B cell (primary cell): ENCODE measurements at regions of chr17 and their contacts with region 1.

Region 1: GRCh38 chr17:50345432-50346312 is at the start of gene XYLT2:
- DNase-seq: peak; percentile 95
- ATAC-seq: peak; percentile 95
- H3K4me3 ChIP-seq: peak within 1 kb of the TSS; percentile 9 to 80 (median 75)
- H3K4me3 Mint-ChIP-seq: peak within 1 kb of the TSS; percentile 92
- H3K27ac ChIP-seq: peak within 1 kb of the TSS; percentile 18 to 54
- H3K27ac Mint-ChIP-seq: peak within 1 kb of the TSS; percentile 91
- H3K4me1 ChIP-seq: peaks cover 10 to 21% of the 10 kb centered on the region in 2 donors
- H3K4me1 Mint-ChIP-seq: peaks cover 32% of the 10 kb centered on the region
- H3K27me3 ChIP-seq: no peaks in the 10 kb centered on the region
- H3K27me3 Mint-ChIP-seq: peaks cover 4% of the 10 kb centered on the region
- CTCF ChIP-seq: no peak
- total RNA-seq, gene XYLT2: 29.9 and 30.3 TPM in 2 replicates

Region 2: DNA sequence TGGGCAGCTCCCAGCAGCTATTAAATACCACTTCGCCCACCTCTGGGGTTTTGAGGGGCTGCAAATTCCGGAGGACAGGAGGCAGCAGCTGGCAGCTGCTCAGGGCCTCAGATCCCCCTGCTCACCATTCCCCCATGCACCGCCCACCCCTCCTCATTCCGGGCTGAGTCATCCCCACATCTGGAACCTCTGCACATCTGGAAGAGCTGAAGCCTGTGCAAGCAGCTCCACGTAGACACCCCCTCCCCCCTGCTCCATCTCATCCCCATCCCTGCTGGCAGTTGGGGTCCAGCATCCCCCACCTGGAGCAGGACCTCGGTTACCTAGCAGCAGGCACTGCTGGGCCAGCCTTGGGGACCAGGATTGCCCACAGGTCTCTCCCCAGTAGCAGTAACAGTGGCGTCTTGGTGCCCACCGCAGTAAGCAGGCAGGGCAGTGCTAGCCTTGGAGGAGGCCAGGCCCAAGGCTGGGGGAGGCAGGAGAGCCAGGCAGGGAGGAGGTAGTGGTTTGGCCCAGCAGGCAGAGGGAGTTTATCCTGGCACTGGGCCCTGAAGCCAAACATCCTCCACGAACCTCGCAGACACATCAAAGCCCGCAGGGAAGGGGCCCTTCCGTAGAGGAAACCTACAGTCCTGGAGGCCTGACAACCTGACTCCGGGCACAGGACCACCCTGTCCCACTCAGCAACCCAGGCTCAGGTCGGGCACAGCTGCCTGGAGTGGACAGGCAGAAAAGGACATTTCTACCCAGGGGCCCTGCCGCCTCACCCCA is 79.2 kb before region 1 on chr17:
- CTCF ChIA-PET with region 1: no interaction called
- POLR2A ChIA-PET with region 1: no interaction called
- intact Hi-C with region 1: no loop called
- DNase-seq: no peak
- ATAC-seq: no peak
- H3K4me3 ChIP-seq: no peak overlapping the region
- H3K4me3 Mint-ChIP-seq: no peak overlapping the region
- H3K27ac ChIP-seq: no peak overlapping the region
- H3K27ac Mint-ChIP-seq: no peak overlapping the region
- H3K4me1 ChIP-seq: no peaks in the 10 kb centered on the region
- H3K4me1 Mint-ChIP-seq: no peaks in the 10 kb centered on the region
- H3K27me3 ChIP-seq: peaks cover 0 to 3% (median 0%) of the 10 kb centered on the region in 4 experiments
- H3K27me3 Mint-ChIP-seq: peaks cover 22% of the 10 kb centered on the region
- CTCF ChIP-seq: no peak

Region 3: DNA sequence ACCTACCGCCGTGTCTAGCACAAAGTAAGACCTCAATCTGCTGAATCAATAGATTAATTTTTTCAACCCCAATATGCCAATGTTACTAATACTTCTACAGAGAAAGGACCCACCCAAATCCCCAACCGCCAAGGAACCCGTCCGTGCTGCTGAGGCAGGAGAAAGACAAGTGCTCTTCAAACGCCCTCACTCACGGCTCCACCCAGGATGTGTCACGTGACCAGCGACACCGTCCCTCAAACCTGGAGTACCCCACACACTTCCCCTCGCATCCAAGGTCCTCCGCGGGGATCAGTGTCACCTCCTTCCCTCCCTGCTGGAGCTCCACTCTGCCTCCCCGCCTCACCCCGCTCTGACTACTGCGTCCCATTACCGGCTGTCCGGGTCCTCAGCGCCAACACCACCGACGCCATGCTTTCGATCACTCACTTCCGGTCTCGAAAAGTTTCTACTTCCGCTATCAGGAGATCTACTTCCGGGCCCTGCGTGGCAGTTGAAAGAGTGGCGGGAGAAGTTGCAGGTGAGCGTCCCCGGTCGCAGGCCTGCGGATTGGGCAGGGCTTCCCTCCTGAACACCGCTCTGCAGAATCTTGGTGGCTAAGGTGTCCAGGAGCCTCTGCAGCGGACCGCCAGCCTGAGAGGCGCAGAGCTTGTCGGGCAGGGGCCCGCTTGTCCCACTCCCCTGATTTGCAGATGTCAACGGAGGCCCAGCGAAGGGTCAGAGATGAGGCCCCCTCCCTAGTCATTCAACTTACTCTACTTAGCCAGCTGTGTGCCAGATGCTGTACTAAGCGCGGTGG is 27.3 kb after region 1 on chr17 and contains the starts of genes EME1 and MRPL27:
- CTCF ChIA-PET with region 1: interaction called, 5 read pairs
- POLR2A ChIA-PET with region 1: no interaction called
- intact Hi-C with region 1: loop called (anchors 2 kb)
- DNase-seq: peak; percentile 96
- ATAC-seq: peak; percentile 88
- H3K4me3 ChIP-seq: peak within 1 kb of the TSS; percentile 65 to 85 (median 81)
- H3K4me3 Mint-ChIP-seq: peak within 1 kb of the TSS; percentile 100
- H3K27ac ChIP-seq: peak within 1 kb of the TSS; percentile 91 to 96
- H3K27ac Mint-ChIP-seq: peak within 1 kb of the TSS; percentile 100
- H3K4me1 ChIP-seq: peaks cover 14 to 19% of the 10 kb centered on the region in 2 donors
- H3K4me1 Mint-ChIP-seq: peaks cover 23% of the 10 kb centered on the region
- H3K27me3 ChIP-seq: no peaks in the 10 kb centered on the region
- H3K27me3 Mint-ChIP-seq: no peaks in the 10 kb centered on the region
- CTCF ChIP-seq: no peak
- total RNA-seq, gene EME1: 2.3 and 3.4 TPM in 2 replicates
- total RNA-seq, gene MRPL27: 33.5 and 40.2 TPM in 2 replicates

Region 4: GRCh38 chr17:50507871-50508572 is 162.3 kb after region 1 on chr17 and contains the start of gene MYCBPAP:
- CTCF ChIA-PET with region 1: no interaction called
- POLR2A ChIA-PET with region 1: no interaction called
- intact Hi-C with region 1: loop called (anchors 1 kb)
- DNase-seq: peak; percentile 85
- ATAC-seq: peak; percentile 84
- H3K4me3 ChIP-seq: peak within 1 kb of the TSS; percentile 41 to 79 (median 54)
- H3K4me3 Mint-ChIP-seq: peak within 1 kb of the TSS; percentile 84
- H3K27ac ChIP-seq: peak within 1 kb of the TSS; percentile 1 to 19
- H3K27ac Mint-ChIP-seq: peak within 1 kb of the TSS; percentile 83
- H3K4me1 ChIP-seq: peaks cover 9 to 19% of the 10 kb centered on the region in 2 donors
- H3K4me1 Mint-ChIP-seq: peaks cover 28% of the 10 kb centered on the region
- H3K27me3 ChIP-seq: peaks cover 0 to 8% (median 3%) of the 10 kb centered on the region in 4 experiments
- H3K27me3 Mint-ChIP-seq: no peaks in the 10 kb centered on the region
- CTCF ChIP-seq: no peak
- total RNA-seq, gene MYCBPAP: 5.1 and 5.5 TPM in 2 replicates